Left cardiac atrium (tissue), 4 donors: ENCODE measurements at regions of chr11 and their contacts with region 1.

Region 1: DNA sequence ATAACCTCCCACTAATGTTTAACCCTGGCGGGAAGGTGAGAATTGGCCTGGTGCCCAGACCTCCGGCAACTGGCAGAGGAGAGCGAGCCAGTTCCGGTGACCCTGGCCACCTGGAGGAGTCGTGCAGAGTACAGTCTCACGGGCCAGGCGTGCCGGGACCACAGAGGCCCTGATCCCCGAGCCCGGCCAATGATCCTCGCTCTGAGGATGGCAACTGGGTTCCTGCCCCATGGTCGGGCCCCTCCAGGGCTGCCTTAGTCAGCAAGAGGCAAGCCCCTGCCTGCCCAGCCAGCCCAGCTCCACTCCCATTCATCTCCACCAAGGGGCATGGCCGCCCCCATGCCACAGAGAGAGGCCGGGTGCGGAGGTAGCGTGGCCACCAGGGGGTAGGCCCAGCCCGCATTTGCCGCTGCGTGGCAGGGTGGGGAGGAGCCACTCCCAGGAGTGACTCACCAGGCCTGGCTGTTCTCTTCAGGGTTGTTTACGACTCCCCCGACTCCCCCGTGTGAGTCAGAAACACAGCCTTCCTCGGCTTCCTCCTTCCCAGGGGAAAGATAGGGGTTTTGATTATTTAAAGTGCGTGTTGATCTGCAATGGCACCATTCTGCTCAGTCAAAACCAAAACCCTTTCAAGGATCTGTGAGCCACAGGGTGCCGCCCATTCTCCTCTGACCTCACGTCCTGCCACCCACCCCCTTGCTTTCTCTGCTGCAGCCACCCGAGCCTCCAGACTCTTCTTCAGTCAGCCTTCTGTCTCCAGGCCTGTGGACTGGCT is at the start of gene SLC25A45:
- DNase-seq: peak; percentile 95
- ATAC-seq: peak; percentile 83 to 94
- total RNA-seq, gene SLC25A45: 4.1 to 7.2 TPM

Region 2: GRCh38 chr11:65512306-65512705 is 130.1 kb after region 1 on chr11:
- intact Hi-C with region 1: loop called in 1 of 2 experiments (anchors 5 kb)
- DNase-seq: no peak
- ATAC-seq: no peak